ENCODE measurements at regions of chr1 and their contacts with region 1.

Region 1: GRCh38 chr1:40877698-40878097 is 15.5 kb upstream of the CITED4 start:
- DNase-seq: peak; percentile 77
- H3K27ac ChIP-seq: peak overlapping the region; percentile 88
- CTCF ChIP-seq: no peak

Region 2: GRCh38 chr1:40862008-40862863 is 15.5 kb before region 1 on chr1 and contains the start of gene CITED4:
- CTCF ChIA-PET with region 1: interaction called, 5 read pairs
- POLR2A ChIA-PET with region 1: interaction called, 11 read pairs
- DNase-seq: peak; percentile 95
- H3K27ac ChIP-seq: peak within 1 kb of the TSS; percentile 77
- CTCF ChIP-seq: no peak; the same call in 1 of the 2 replicates